Prostate gland (tissue), 2 donors: ENCODE measurements at regions of chr9 and their contacts with region 1.

Region 1: DNA sequence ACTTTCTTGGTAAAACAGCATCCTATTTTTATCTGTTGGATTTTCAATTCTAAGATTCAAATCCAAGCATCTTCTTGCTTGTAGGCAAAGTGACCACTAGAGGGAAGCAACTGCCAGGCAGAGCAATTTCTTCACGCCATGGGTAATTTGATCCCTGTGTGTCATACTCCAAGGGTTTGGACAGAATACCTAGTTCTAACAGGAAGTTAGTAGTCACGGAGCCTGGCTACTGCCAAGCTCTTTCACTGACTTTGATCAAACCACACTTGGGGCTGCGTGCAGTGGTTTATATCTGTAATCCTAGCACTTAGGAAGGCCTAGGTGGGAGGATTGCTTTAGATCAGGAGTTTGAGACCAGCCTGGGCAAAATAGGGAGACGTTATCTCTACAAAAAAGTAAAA is 473.6 kb upstream of the TNC start:
- DNase-seq: peak; percentile 79
- H3K4me3 ChIP-seq: no peak overlapping the region
- H3K27ac ChIP-seq: peak overlapping the region; percentile 28 to 29
- H3K4me1 ChIP-seq: peaks cover 2% of the 10 kb centered on the region
- H3K27me3 ChIP-seq: no peaks in the 10 kb centered on the region
- CTCF ChIP-seq: peak in 3 of 4 experiments; percentile 55 to 86 (median 84)
- POLR2A ChIP-seq: no peak

Region 2: DNA sequence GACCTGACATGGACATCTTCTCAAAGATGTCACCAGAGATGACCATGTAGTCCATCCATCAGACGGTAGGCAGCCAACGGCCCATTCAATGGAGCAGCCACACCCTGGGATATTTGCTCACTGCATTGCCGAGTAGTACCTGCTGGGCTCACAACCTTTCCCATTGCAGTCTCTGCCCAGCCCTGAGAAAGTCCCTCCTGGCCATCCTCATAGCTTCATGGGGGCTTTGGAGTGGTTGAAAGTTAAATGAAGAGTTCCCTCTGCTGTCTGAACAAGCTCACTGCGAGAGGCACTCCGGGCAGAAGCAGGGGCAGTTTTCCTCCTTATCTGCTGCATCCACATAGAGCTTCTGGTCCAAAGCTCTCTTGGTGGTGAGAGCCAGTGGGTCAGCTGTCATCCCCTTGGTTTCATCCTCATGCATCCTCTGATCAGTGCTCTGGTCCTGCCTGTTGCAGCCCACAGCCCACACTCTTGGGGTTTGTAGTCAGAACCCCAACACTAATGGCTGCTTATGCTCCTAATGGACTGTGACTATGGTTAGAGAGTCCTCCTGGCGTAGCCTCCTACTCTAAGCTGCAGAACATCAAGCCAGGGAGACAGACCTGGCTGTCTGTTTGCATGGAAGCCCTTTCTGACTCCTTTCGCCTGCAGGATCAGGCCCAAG is 684.5 kb before region 1 on chr9:
- intact Hi-C with region 1: no loop called
- DNase-seq: no peak
- H3K4me3 ChIP-seq: no peak overlapping the region
- H3K27ac ChIP-seq: no peak overlapping the region
- H3K4me1 ChIP-seq: peaks cover 3% of the 10 kb centered on the region
- H3K27me3 ChIP-seq: no peaks in the 10 kb centered on the region
- CTCF ChIP-seq: peak in 3 of 4 experiments; percentile 37 to 59 (median 59)
- POLR2A ChIP-seq: no peak

Region 3: DNA sequence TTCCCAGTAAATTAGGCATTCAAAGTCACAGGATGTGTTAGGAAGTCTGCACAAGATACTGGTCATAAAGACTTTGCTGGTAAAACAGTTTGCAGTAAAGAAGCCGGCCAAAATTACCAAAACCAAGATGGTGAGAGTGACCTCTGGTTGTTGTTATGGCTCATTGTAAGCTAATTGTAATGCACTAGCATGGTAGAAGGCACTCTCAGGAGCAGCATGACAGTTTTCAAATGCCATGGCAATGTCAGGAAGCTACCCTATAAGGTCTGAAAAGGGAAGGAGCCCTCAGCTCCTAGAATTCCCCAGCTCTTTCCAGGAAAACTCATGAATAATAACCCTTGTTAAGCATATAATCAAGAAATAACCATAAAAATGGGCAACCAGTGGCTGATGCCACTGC is 409.3 kb before region 1 on chr9:
- intact Hi-C with region 1: no loop called
- DNase-seq: no peak
- H3K4me3 ChIP-seq: no peak overlapping the region
- H3K27ac ChIP-seq: no peak overlapping the region
- H3K4me1 ChIP-seq: no peaks in the 10 kb centered on the region
- H3K27me3 ChIP-seq: no peaks in the 10 kb centered on the region
- CTCF ChIP-seq: no peak
- POLR2A ChIP-seq: no peak

Region 4: DNA sequence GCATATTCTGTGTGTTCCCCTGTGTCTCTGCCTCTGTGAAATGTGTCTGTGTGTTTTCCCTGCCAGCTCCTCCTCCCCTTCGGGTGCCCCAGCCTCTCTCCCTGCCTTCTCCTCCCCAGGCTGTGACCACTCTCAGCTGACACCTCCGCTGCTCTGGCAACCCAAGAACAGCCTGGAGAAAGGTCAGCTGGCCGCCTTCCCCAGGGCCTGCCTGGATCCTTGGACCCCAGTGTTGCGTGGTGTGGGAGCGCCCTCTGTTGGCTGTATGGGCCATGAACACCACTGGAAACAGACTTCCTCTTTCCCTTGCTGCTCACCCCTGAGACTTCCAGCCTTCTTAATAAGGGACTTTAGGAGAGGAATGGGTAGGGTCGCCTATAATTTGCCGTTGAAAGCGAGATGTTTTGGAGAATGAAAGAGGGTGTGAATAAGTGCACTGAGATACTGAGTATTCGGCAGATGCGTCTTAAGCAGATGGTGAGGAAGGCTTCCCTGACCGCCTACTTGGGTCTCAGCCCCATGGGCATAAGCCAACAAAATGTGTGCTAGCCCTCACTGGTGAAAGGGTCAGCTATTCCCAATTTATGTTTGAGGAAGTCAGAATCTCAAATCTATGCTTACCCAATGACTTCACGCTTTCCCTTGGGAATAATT is 980.6 kb after region 1 on chr9:
- intact Hi-C with region 1: loop called (anchors 5 kb)
- DNase-seq: no peak
- H3K4me3 ChIP-seq: no peak overlapping the region
- H3K27ac ChIP-seq: no peak overlapping the region
- H3K4me1 ChIP-seq: no peaks in the 10 kb centered on the region
- H3K27me3 ChIP-seq: no peaks in the 10 kb centered on the region
- CTCF ChIP-seq: peak; percentile 28 to 66 (median 58)
- POLR2A ChIP-seq: no peak

Region 5: GRCh38 chr9:116646661-116647512 is 1055.3 kb after region 1 on chr9:
- intact Hi-C with region 1: loop called (anchors 5 kb)
- DNase-seq: no peak
- H3K4me3 ChIP-seq: no peak overlapping the region
- H3K27ac ChIP-seq: no peak overlapping the region
- H3K4me1 ChIP-seq: no peaks in the 10 kb centered on the region
- H3K27me3 ChIP-seq: no peaks in the 10 kb centered on the region
- CTCF ChIP-seq: peak in 3 of 4 experiments; percentile 31 to 39 (median 32)
- POLR2A ChIP-seq: no peak

Region 6: DNA sequence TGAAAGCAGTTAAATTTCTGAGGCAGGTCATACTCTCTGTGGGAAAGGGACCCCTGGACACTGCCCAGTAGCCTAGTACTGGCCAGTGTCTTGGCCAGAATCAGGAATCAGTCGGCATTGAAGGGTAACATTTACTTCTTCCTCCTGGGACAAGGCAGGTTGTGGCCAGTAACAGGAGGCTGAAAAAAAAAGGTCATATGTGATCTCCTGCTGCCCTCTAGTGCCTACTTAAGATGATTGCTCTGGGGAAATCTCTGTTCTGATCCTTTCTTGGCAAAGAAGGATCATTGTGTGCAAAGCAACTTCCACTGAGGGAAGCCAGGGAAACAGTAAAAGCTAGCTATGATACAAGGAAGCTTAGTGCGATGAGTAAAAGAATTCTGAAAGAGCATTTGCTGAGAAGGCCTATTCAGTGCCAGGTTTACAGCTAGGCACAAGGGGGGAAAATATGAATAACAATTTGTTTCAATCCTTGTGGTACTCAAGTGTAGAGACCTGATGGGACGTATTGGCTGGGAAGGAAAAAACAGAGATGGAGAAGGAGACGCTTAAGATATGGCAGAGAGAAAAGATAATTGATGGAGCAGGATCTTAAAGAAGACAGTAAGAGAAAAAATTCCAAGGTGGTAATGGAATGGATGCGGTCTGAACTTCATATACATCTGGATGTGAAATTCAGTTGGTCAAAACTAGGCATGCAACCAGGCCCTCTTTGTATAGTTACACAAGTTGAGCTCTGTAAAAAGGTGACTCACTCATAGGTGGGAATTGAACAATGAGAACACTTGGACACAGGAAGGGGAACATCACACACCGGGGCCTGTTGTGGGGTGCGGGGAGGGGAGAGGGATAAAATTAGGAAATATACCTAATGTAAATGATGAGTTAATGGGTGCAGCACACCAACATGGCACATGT is 1069.7 kb after region 1 on chr9:
- intact Hi-C with region 1: loop called (anchors 2 kb)
- DNase-seq: peak; percentile 12
- H3K4me3 ChIP-seq: no peak overlapping the region
- H3K27ac ChIP-seq: no peak overlapping the region
- H3K4me1 ChIP-seq: no peaks in the 10 kb centered on the region
- H3K27me3 ChIP-seq: no peaks in the 10 kb centered on the region
- CTCF ChIP-seq: peak in 3 of 4 experiments; percentile 53 to 69 (median 67)
- POLR2A ChIP-seq: no peak